ENCODE measurements at regions of chr1 and their contacts with region 1.

Region 1: GRCh38 chr1:11979851-11980675 is at the start of gene MFN2:
- DNase-seq: peak; percentile 88
- ATAC-seq: peak; percentile 96
- H3K4me3 ChIP-seq: peak within 1 kb of the TSS; percentile 98 to 99
- H3K27ac ChIP-seq: peak within 1 kb of the TSS; percentile 90
- H3K4me1 ChIP-seq: peaks cover 26% of the 10 kb centered on the region
- H3K27me3 ChIP-seq: no peaks in the 10 kb centered on the region
- CTCF ChIP-seq: no peak
- total RNA-seq, gene MFN2: 104 TPM

Region 2: GRCh38 chr1:11944358-11944931 is 35.6 kb before region 1 on chr1:
- CTCF ChIA-PET with region 1: interaction called, 10 read pairs
- POLR2A ChIA-PET with region 1: no interaction called
- in situ Hi-C with region 1: no loop called
- intact Hi-C with region 1: no loop called
- DNase-seq: no peak
- ATAC-seq: no peak
- H3K4me3 ChIP-seq: no peak overlapping the region
- H3K27ac ChIP-seq: no peak overlapping the region
- H3K4me1 ChIP-seq: no peaks in the 10 kb centered on the region
- H3K27me3 ChIP-seq: no peaks in the 10 kb centered on the region
- CTCF ChIP-seq: no peak

Region 3: DNA sequence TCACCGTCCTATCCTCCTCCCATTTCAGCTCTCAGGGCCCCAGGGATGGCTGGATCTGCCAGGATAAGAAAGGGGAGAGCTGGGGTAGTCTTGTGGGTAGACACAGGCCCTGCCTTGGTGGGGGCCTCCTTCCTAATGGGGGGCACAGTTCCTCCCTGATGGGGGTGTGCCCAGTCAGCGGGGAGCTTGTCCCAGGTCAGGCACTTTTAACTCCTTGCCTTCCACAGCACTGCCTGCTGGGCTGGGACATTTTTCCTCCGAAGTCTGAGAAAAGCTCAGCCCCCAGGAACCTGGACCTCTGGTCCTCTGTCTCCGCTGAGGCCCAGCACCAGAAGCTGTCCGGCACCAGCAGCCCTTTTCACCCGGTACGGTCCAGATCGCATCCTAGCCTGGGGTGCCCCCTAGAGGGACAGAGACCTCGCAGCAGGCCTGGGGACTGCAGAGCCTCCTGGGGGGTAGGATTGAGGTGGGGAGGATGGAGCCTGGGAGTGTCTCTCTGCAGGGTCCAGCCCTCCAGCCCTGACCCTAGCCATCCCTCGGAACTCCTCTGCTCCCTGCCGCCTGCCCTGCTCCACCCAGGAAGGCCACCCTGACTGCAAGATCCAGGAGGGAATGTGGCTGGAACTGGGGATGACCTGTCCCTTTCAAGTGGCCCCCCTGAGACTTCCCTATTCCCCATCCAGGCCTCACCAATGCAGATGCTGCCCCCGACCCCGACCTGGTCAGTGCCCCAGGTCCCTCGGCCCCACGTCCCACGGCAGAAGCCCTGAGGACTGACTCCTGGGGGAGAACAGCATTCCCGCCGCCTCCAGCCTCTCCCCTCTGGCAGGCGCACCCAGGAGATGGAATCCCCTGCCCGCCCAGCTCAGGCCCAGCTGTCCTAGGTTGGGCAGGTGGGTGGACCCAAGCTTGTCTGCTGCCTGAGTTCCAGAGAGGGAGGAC is 51.2 kb after region 1 on chr1:
- CTCF ChIA-PET with region 1: no interaction called
- POLR2A ChIA-PET with region 1: no interaction called
- in situ Hi-C with region 1: no loop called
- intact Hi-C with region 1: no loop called
- DNase-seq: no peak
- ATAC-seq: peak; percentile 86
- H3K4me3 ChIP-seq: no peak overlapping the region
- H3K27ac ChIP-seq: no peak overlapping the region
- H3K4me1 ChIP-seq: no peaks in the 10 kb centered on the region
- H3K27me3 ChIP-seq: no peaks in the 10 kb centered on the region
- CTCF ChIP-seq: peak; percentile 86; the same call in 1 of the 2 replicates

Measured in Panc1 (cell line).